Prostate gland (tissue), 2 donors: ENCODE measurements at regions of chr14 and their contacts with region 1.

Region 1: GRCh38 chr14:20454516-20455354 is at the starts of genes APEX1 and OSGEP:
- DNase-seq: peak; percentile 99
- H3K4me3 ChIP-seq: peak within 1 kb of the TSS; percentile 72 to 85
- H3K27ac ChIP-seq: peak within 1 kb of the TSS; percentile 95 to 97
- H3K4me1 ChIP-seq: no peaks in the 10 kb centered on the region
- H3K27me3 ChIP-seq: no peaks in the 10 kb centered on the region
- CTCF ChIP-seq: peak in 2 of 4 experiments; percentile 15 to 25
- POLR2A ChIP-seq: peak; percentile 65
- total RNA-seq, gene APEX1: 113 to 178 TPM
- total RNA-seq, gene OSGEP: 54.2 to 71.7 TPM

Region 2: DNA sequence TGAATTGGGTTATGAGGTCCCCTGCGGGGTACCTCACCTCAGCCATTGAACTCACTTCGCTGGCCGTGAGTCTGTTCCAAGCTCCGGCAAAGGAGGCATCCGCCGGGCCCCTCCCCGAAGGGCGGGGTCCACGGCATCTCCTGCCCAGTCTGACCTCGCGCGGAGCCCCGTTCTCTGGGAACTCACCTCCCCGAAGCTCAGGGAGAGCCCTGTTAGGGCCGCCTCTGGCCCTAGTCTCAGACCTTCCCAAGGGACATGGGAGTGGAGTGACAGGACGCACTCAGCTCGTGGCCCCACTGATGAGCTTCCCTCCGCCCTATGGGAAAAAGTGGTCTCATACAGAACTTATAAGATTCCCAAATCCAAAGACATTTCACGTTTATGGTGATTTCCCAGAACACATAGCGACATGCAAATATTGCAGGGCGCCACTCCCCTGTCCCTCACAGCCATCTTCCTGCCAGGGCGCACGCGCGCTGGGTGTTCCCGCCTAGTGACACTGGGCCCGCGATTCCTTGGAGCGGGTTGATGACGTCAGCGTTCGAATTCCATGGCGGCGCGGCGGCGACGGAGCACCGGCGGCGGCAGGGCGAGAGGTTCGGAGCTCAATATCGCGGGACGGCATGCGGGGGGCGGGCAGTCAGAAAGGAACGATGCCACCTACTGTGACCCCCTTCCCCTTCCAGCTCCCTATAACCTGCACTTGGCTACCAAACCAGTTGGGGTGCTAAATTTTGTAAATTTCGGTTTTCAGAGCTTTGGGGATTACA is 111.5 kb before region 1 on chr14 and contains the start of gene PARP2:
- intact Hi-C with region 1: loop called (anchors 2 kb)
- DNase-seq: peak; percentile 95
- H3K4me3 ChIP-seq: peak within 1 kb of the TSS; percentile 56 to 68
- H3K27ac ChIP-seq: peak within 1 kb of the TSS; percentile 89
- H3K4me1 ChIP-seq: no peaks in the 10 kb centered on the region
- H3K27me3 ChIP-seq: no peaks in the 10 kb centered on the region
- CTCF ChIP-seq: peak in 2 of 4 experiments; percentile 18 to 27
- POLR2A ChIP-seq: peak; percentile 65
- total RNA-seq, gene PARP2: 10.7 to 23.1 TPM